ENCODE measurements at regions of chr15 and their contacts with region 1.

Region 1: GRCh38 chr15:80152180-80152845 is 486 bp upstream of the FAH start:
- DNase-seq: peak; percentile 99
- H3K4me3 ChIP-seq: peak overlapping the region; percentile 58 to 80 (median 74)
- H3K27ac ChIP-seq: peak overlapping the region; percentile 81 to 90 (median 86)
- H3K4me1 ChIP-seq: peaks cover 0 to 19% (median 13%) of the 10 kb centered on the region in 4 donors
- H3K27me3 ChIP-seq: no peaks in the 10 kb centered on the region
- CTCF ChIP-seq: no peak
- EP300 ChIP-seq: no peak
- POLR2A ChIP-seq: no peak

Region 2: DNA sequence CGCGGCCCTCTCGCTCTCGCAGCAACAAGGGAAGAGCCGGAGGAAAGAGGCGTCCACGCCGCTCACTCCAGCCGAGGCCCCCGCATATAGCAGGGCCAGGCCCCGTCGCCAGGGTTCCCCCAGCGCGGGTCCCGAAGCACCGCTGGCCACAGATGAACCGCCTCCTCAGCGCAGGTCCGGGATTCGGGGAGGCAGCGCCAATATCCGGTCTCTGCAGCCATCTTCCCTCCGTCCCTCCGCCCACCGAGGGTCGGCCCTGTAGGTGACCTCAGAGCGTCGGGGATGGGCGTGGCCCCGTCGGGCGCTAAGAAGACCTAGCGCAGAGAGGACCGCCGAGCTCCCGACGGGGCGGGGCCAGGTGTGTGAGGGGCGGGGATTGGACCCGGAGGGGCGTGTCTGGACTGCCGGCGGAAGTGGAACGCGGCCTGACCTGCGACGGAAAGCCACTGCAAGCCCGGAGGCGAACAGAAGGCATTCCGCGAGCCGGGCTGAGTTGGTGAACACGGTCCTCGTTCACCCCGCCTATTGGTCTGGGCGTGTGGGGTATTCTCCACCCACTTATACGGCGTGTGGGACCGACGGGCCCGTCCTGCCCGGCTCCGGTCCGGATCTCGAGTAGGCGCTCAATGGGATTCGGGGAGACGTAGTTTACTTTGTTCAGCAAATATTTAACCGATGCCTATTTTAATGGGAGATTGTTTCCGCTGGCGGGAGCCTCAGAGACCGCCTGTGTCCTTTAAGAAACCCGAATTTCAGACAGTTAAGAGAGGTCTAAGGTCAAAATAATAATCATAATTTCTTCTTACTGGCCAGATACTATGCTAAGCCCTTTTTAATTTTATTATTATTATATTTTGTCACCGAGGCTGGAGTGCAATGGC is 228.6 kb before region 1 on chr15:
- intact Hi-C with region 1: loop called (anchors 5 kb)
- DNase-seq: peak; percentile 97
- H3K4me3 ChIP-seq: peak overlapping the region; percentile 69 to 92 (median 80)
- H3K27ac ChIP-seq: peak overlapping the region; percentile 89 to 99 (median 94)
- H3K4me1 ChIP-seq: peaks cover 0 to 16% (median 8%) of the 10 kb centered on the region in 4 donors
- H3K27me3 ChIP-seq: no peaks in the 10 kb centered on the region
- CTCF ChIP-seq: no peak
- EP300 ChIP-seq: no peak
- POLR2A ChIP-seq: peak; percentile 67 to 76